A549 (cell line): ENCODE measurements at regions of chr11 and their contacts with region 1.

Region 1: DNA sequence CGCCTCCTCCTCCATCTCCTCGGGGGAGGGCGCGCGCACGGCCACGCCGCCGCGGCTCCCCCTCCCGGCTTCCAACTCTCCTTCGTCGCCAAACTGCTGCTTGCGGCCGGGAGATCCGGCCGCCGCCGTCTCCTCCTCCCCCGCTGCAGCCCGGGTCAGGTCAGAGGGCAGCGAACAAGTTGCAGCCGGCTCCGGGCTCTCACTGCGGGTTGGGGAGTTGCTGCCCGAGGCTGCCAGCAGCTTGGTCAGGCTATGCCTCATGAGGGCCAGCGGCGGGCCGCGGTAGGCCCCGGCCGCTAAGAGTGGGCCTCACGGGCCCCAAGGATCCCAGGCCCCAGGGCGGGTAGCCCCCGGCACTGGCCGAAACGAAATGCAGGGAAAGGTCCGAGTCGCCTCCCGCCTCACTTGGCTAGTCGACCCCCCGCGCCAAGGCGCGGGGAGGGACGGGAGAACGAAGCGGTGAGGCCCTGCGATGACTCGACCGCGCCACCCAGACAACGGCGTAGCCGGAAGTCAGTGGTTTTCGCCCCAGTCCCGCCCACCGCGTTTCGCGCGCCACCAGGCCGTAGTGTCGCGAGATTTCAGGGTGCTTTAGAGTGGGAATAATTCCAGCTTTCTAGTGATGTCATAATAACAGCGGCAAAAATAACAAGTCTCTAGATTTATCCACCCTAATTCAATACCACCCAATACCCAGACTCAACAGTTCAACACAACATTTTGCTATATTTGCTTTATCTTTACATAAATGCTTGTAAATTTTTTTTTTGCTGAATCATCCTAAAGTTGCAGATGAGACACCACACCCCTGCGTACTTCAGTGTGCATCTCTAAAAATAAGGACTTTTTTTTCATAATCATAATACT is at the start of gene CREBZF:
- DNase-seq: peak; percentile 90 to 97
- ATAC-seq: peak; percentile 87 to 96
- H3K4me3 ChIP-seq: peak within 1 kb of the TSS; percentile 87
- H3K27ac ChIP-seq: peak within 1 kb of the TSS; percentile 95 to 96
- H3K4me1 ChIP-seq: peaks cover 27% of the 10 kb centered on the region
- CTCF ChIP-seq: no peak
- EP300 ChIP-seq: no peak
- POLR2A ChIP-seq: peak; percentile 84
- RAD21 ChIP-seq: no peak
- polyA plus RNA-seq, gene CREBZF: 58.5 and 61.8 TPM in 2 replicates

Region 2: GRCh38 chr11:85627998-85628770 is 36.7 kb before region 1 on chr11 and contains the start of gene TMEM126B:
- CTCF ChIA-PET with region 1: no interaction called
- POLR2A ChIA-PET with region 1: interaction called, 18 read pairs
- DNase-seq: peak; percentile 84 to 96
- ATAC-seq: peak; percentile 97 to 99
- H3K4me3 ChIP-seq: peak within 1 kb of the TSS; percentile 57
- H3K27ac ChIP-seq: peak within 1 kb of the TSS; percentile 79 to 89
- H3K4me1 ChIP-seq: peaks cover 14% of the 10 kb centered on the region
- CTCF ChIP-seq: no peak
- EP300 ChIP-seq: no peak
- POLR2A ChIP-seq: peak; percentile 87
- RAD21 ChIP-seq: no peak
- polyA plus RNA-seq, gene TMEM126B: 88.9 and 114 TPM in 2 replicates

Region 3: DNA sequence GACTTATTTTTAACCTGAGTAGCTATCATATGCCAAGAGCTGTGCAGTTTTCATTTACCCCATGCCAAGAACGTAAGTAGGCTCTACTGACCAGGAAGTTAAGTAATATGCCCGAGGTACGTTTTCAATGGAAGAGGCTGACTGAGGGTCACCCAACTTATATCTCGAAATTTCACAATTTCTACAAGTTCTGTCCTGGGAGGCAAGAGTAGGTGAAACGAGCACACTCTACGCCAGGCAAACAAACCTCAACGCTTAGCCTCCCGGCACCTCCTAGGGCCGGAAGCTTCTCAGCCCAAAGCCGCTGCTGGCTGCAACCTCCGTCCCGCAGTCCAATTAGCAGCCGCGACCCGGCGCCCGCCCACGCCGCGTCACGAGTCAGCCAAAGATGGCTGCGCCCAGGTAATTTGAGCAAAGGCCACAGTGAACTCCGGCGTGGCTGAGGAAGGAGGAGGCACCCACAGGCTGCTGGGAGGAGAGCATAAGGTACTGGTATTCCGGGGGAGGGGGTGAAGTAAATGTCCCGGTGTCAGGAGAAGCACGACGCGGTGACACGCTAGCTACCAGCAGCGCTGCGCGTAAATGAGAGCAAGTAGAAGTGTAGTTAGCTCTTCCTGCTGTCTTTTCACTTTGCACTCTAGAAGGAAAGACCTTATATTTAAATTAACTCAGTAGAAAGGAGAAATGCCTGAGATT is 17.1 kb before region 1 on chr11 and contains the start of gene TMEM126A:
- CTCF ChIA-PET with region 1: interaction called, 11 read pairs
- POLR2A ChIA-PET with region 1: interaction called, 37 read pairs
- DNase-seq: peak; percentile 77 to 89
- ATAC-seq: peak; percentile 97 to 98
- H3K4me3 ChIP-seq: peak within 1 kb of the TSS; percentile 75
- H3K27ac ChIP-seq: peak within 1 kb of the TSS; percentile 86 to 89
- H3K4me1 ChIP-seq: peaks cover 18% of the 10 kb centered on the region; the same call in 2 of the 3 replicates
- CTCF ChIP-seq: no peak
- EP300 ChIP-seq: no peak
- POLR2A ChIP-seq: peak; percentile 88
- RAD21 ChIP-seq: no peak
- polyA plus RNA-seq, gene TMEM126A: 101 and 123 TPM in 2 replicates

Region 4: DNA sequence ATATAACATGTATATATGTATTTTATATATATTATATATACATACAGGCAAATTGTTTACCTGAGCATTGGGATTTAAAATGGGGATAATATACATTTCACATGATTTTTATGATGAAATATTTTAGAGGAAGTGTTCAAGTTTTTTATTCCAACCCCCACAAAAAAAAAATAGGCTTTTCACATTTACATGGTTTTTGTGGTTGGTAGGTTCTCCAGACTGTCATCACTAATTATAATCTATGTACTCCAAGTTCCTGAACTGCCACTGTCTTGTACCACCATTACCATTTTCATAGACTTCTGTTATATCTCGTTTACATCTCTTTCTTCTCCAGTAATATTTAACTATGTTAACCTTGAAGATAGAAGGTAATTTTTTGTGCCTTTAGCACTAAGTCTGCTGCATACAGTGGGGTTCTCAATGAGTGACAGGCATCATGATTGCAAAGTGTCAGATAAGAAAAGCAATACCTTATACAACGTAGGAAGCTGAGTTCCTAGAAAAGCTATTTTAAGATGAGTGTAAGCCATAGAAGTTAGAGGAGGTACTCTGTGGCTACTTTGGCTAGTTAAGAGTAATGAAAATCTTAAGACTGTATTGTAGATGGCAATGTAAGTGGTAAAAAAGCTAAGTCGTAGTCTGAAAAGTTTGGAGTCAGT is 11.9 kb before region 1 on chr11:
- CTCF ChIA-PET with region 1: interaction called, 11 read pairs
- POLR2A ChIA-PET with region 1: interaction called, 37 read pairs
- DNase-seq: no peak
- ATAC-seq: no peak
- H3K4me3 ChIP-seq: no peak overlapping the region
- H3K27ac ChIP-seq: no peak overlapping the region
- H3K4me1 ChIP-seq: peaks cover 17% of the 10 kb centered on the region; the same call in 2 of the 3 replicates
- CTCF ChIP-seq: no peak
- EP300 ChIP-seq: no peak
- POLR2A ChIP-seq: no peak
- RAD21 ChIP-seq: no peak